WTC11 (cell line): ENCODE measurements at regions of chr1 and their contacts with region 1.

Region 1: GRCh38 chr1:155084722-155085503 is 6.3 kb downstream of the EFNA3 start:
- DNase-seq: peak; percentile 97
- ATAC-seq: peak; percentile 67
- H3K4me3 Mint-ChIP-seq: peak overlapping the region; percentile 95
- H3K27ac Mint-ChIP-seq: peak overlapping the region; percentile 74
- H3K4me1 Mint-ChIP-seq: peaks cover 35% of the 10 kb centered on the region
- H3K27me3 Mint-ChIP-seq: peaks cover 45% of the 10 kb centered on the region
- CTCF ChIP-seq: peak; percentile 90

Region 2: DNA sequence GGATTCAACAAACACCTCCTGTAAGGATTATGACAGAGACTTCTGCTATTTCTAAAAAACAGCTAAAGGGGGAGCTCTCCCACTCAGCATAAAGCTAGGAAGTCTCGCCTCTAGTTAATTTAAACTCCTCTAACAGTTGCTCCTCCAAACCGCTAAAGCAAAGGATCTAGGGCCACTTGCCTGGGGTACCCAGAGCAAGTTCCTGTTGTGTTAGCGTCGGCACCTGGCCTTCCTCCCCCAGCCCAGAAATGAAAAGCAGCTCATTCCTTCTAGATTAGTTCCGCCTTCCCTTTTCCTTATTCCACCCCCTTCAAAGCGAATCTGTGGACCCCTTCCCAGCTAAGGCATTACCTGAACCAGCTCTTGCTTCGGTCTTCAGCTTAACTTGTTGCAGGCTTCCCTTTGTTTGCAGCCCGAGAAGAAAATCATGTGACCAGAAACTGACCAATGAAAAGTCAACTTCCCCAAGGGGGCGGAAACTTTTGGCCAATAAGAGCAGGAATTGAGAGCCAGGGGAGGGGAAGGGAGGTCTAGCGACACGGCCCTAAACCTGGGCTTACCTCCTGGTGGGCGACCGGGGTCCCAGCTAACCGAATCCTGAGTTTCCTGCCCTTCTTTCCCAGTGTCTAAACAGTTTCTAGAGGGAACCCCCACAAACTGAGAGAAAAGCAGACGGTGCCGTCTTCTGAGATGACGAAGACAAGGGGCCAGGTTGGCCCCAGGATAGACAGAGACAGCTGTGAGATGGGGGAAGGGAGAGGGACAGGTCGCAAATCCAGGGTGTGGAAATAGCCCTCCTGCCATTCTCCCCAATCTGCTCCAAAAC is 129.0 kb before region 1 on chr1 and contains the start of gene PBXIP1:
- CTCF ChIA-PET with region 1: interaction called, 10 read pairs
- POLR2A ChIA-PET with region 1: no interaction called
- DNase-seq: peak; percentile 85
- ATAC-seq: peak; percentile 87
- H3K4me3 Mint-ChIP-seq: peak within 1 kb of the TSS; percentile 97
- H3K27ac Mint-ChIP-seq: peak within 1 kb of the TSS; percentile 99
- H3K4me1 Mint-ChIP-seq: peaks cover 53% of the 10 kb centered on the region
- H3K27me3 Mint-ChIP-seq: no peaks in the 10 kb centered on the region
- CTCF ChIP-seq: no peak
- total RNA-seq, gene PBXIP1: 26.5 to 30.7 TPM (median 28.4 TPM) in 3 replicates

Region 3: DNA sequence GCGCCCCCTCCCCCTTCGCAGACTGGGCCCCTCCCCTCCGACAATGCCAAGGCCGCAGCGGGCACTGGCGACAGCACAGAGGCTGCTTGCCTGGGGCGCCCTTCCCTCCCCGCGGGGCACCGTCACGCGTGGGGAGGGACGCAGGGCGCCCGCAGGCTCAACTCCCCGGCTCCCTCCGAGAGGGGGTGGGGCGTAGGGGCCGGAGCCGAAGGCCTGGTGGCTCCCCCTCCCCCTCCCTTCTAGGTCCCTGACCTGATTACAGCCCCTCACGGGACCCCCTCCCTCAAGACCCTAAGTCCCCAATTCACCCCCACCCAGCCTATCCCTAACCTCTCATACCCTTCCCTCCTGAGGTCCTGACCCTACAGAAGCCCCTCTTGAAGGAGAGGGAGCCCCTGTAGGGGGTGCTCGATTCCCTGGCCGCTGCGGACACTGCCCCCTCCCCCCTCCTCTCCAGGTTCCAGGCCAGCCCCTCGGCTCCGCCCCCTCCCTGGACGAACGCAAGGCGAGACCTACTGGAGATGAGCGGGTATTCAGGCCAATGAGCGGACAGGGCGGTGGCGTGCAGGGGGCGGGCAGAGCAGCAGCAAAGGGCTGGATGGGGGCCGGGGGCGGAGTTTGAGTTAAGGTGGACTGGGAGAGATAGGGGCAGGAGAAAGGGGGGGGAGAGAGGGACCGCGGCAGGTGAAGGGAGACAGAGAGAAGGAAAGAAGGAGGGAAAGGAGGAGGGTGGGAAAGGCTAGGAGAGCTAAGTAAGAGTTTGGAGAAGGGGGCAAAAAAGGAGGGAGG is 83.0 kb before region 1 on chr1:
- CTCF ChIA-PET with region 1: interaction called, 17 read pairs
- POLR2A ChIA-PET with region 1: interaction called, 6 read pairs
- DNase-seq: peak; percentile 100
- ATAC-seq: peak; percentile 73
- H3K4me3 Mint-ChIP-seq: peak overlapping the region; percentile 88
- H3K27ac Mint-ChIP-seq: peak overlapping the region; percentile 57; the same call in 1 of the 2 replicates
- H3K4me1 Mint-ChIP-seq: peaks cover 39% of the 10 kb centered on the region
- H3K27me3 Mint-ChIP-seq: no peaks in the 10 kb centered on the region; the same call in 1 of the 2 replicates
- CTCF ChIP-seq: no peak

Region 4: GRCh38 chr1:155044812-155045690 is 39.9 kb before region 1 on chr1:
- CTCF ChIA-PET with region 1: interaction called, 88 read pairs
- POLR2A ChIA-PET with region 1: interaction called, 5 read pairs
- DNase-seq: peak; percentile 77
- ATAC-seq: peak; percentile 92
- H3K4me3 Mint-ChIP-seq: no peak overlapping the region
- H3K27ac Mint-ChIP-seq: no peak overlapping the region
- H3K4me1 Mint-ChIP-seq: peaks cover 35% of the 10 kb centered on the region
- H3K27me3 Mint-ChIP-seq: no peaks in the 10 kb centered on the region; the same call in none of the 2 replicates
- CTCF ChIP-seq: no peak; the same call in 1 of the 2 replicates

Region 5: GRCh38 chr1:155117617-155118016 is 32.7 kb after region 1 on chr1:
- CTCF ChIA-PET with region 1: interaction called, 152 read pairs
- POLR2A ChIA-PET with region 1: no interaction called
- DNase-seq: no peak
- ATAC-seq: no peak
- H3K4me3 Mint-ChIP-seq: no peak overlapping the region
- H3K27ac Mint-ChIP-seq: no peak overlapping the region
- H3K4me1 Mint-ChIP-seq: no peaks in the 10 kb centered on the region
- H3K27me3 Mint-ChIP-seq: peaks cover 36% of the 10 kb centered on the region
- CTCF ChIP-seq: no peak

Region 6: GRCh38 chr1:155167166-155168104 is 82.5 kb after region 1 on chr1:
- CTCF ChIA-PET with region 1: interaction called, 605 read pairs
- POLR2A ChIA-PET with region 1: no interaction called
- DNase-seq: peak; percentile 95
- ATAC-seq: peak; percentile 75
- H3K4me3 Mint-ChIP-seq: peak overlapping the region; percentile 89
- H3K27ac Mint-ChIP-seq: peak overlapping the region; percentile 90
- H3K4me1 Mint-ChIP-seq: peaks cover 24% of the 10 kb centered on the region
- H3K27me3 Mint-ChIP-seq: no peaks in the 10 kb centered on the region; the same call in 1 of the 2 replicates
- CTCF ChIP-seq: peak; percentile 94